Thyroid gland (tissue), 4 donors: ENCODE measurements at regions of chr11 and their contacts with region 1.

Region 1: GRCh38 chr11:119352857-119353260 is 6.4 kb upstream of the MFRP start:
- DNase-seq: peak; percentile 48
- H3K4me3 ChIP-seq: no peak overlapping the region
- H3K27ac ChIP-seq: no peak overlapping the region
- H3K4me1 ChIP-seq: peaks cover 0 to 12% of the 10 kb centered on the region in 2 donors
- H3K27me3 ChIP-seq: no peaks in the 10 kb centered on the region
- CTCF ChIP-seq: no peak
- POLR2A ChIP-seq: no peak

Region 2: DNA sequence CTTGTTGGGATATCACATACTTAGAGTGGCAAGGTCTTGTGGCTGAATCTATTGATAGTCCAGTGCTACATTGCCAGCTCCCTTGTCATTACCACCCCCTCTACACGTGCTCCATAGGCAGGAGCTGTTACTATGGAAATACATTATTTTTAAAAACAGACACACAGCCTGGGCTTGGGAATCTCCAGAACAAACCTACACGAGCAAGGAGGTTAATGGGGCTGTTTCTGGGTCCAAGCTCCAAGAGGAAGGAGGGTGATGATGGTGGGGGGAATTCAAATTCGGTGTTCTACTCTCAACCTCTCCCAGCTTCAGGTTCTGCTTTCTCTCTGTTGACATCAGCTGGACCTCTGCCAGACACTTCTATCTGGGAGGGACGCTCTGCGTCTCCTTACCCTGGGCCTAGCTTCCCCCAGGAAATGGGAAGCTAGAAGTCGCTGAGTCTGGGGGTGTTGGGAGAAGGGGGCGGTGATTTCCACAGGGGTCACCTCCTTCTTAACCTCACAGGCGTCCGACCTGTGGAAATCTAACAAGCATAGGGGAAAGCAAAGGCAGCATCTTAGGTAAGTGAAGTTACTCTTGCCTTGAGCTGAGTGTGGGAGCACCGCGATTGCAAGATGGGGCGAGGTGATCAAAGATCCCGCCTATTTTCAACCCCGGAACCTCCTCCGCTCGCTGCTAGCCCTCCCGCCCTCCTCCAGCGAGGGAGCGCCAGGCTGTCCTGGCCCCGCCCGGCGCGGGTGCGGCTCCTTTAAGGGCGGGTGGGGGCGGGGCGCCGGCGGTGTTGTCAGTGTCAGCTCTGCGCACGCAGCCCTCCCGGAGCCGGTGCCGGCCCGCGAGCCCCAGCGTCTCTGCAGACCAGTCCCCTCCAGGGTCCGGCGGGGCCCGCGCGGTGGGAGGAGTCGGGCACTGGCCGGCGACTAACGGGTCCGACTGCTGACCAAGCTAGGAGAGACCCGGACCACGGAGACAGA is 246.0 kb before region 1 on chr11 and contains the start of gene C2CD2L:
- intact Hi-C with region 1: no loop called
- DNase-seq: peak; percentile 90 to 93
- H3K4me3 ChIP-seq: peak within 1 kb of the TSS; percentile 27 to 94 (median 89)
- H3K27ac ChIP-seq: peak within 1 kb of the TSS; percentile 31 to 66 (median 61)
- H3K4me1 ChIP-seq: peaks cover 14 to 35% of the 10 kb centered on the region in 2 donors
- H3K27me3 ChIP-seq: no peaks in the 10 kb centered on the region
- CTCF ChIP-seq: no peak
- POLR2A ChIP-seq: peak in 1 of 2 donors; percentile 54
- total RNA-seq, gene C2CD2L: 6.7 to 8.9 (median 7.9) TPM

Region 3: DNA sequence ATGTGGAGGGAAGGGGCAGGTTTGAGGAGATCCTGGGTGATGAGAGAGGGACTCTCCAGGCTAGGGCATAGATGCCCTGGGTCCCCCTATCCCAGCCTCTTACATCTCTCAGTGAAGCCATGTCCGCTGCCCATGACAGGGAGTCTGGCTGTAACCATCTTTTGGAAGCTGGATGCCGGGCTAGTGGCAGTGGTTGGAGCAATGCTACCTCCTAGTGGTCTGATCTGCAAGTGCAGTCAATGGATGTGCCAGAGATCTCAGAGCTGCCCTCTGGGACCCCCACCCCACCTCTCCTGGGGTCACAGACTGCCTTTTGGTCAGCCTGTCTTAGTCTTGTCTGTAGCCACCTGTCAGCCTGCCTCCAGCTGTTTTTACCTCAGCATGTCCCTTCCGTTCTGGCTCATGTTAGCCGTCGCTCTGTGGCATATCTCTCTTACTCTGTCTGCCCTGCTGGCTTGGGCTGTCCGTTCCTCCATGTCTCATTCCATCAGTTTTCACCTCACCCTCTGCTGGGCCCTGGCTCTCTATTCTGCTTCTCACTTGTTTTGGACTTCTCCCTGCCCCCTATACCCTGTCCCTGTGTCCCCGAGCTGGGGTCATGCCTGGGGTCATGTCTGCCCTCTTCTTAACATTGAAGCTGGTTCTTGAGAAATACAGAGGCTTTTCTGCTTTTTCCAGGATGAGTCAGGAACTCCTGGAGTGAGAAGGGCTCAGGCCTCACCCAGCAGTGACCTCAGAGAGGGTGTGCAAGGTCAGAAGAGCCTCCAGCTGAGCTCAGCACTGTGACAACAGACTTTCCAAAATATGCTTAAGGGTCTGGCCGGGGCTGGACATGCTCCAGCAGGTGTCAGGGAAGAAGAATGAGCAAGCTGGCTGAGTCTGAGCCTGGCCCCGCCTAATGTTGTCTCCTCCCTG is 122.1 kb after region 1 on chr11:
- intact Hi-C with region 1: loop called (anchors 5 kb)
- DNase-seq: peak; percentile 64 to 68
- H3K4me3 ChIP-seq: no peak overlapping the region
- H3K27ac ChIP-seq: no peak overlapping the region
- H3K4me1 ChIP-seq: no peaks in the 10 kb centered on the region
- H3K27me3 ChIP-seq: no peaks in the 10 kb centered on the region
- CTCF ChIP-seq: peak; percentile 76 to 95 (median 88)
- POLR2A ChIP-seq: no peak